Ascending aorta (tissue), 2 donors: ENCODE measurements at regions of chr21 and their contacts with region 1.

Region 1: GRCh38 chr21:36209626-36210171 is 53.1 kb downstream of the DOP1B start:
- DNase-seq: no peak
- H3K4me3 ChIP-seq: no peak overlapping the region
- H3K27ac ChIP-seq: no peak overlapping the region
- H3K4me1 ChIP-seq: no peaks in the 10 kb centered on the region
- H3K27me3 ChIP-seq: no peaks in the 10 kb centered on the region
- CTCF ChIP-seq: peak in 2 of 3 experiments; percentile 23 to 39

Region 2: GRCh38 chr21:36125512-36126222 is 84.0 kb before region 1 on chr21:
- intact Hi-C with region 1: loop called (anchors 5 kb)
- DNase-seq: peak in 1 of 2 donors; percentile 75
- H3K4me3 ChIP-seq: no peak overlapping the region
- H3K27ac ChIP-seq: no peak overlapping the region
- H3K4me1 ChIP-seq: peaks cover 0 to 5% of the 10 kb centered on the region in 2 donors
- H3K27me3 ChIP-seq: no peaks in the 10 kb centered on the region
- CTCF ChIP-seq: peak; percentile 55 to 87 (median 84)

Region 3: GRCh38 chr21:36141513-36141925 is 68.2 kb before region 1 on chr21:
- intact Hi-C with region 1: loop called (anchors 2 kb)
- DNase-seq: peak in 1 of 2 donors; percentile 91
- H3K4me3 ChIP-seq: no peak overlapping the region
- H3K27ac ChIP-seq: no peak overlapping the region
- H3K4me1 ChIP-seq: peaks cover 0 to 2% of the 10 kb centered on the region in 2 donors
- H3K27me3 ChIP-seq: no peaks in the 10 kb centered on the region
- CTCF ChIP-seq: peak; percentile 71 to 78 (median 74)

Region 4: GRCh38 chr21:36282568-36283230 is 73.0 kb after region 1 on chr21:
- intact Hi-C with region 1: no loop called
- DNase-seq: no peak
- H3K4me3 ChIP-seq: no peak overlapping the region
- H3K27ac ChIP-seq: no peak overlapping the region
- H3K4me1 ChIP-seq: no peaks in the 10 kb centered on the region
- H3K27me3 ChIP-seq: no peaks in the 10 kb centered on the region
- CTCF ChIP-seq: no peak